Activated CD4-positive, alpha-beta T cell treated with anti-CD3 and anti-CD28 coated beads, Interleukin-2, amount 10 ng/mL, durations not matched to agents 24 days and 14 days (primary cell): ENCODE measurements at regions of chr9 and their contacts with region 1.

Region 1: GRCh38 chr9:134135343-134136118 is at the start of gene WDR5:
- DNase-seq: peak; percentile 96
- H3K4me3 Mint-ChIP-seq: peak within 1 kb of the TSS; percentile 96
- H3K27ac Mint-ChIP-seq: peak within 1 kb of the TSS; percentile 94
- H3K4me1 Mint-ChIP-seq: peaks cover 29% of the 10 kb centered on the region
- H3K27me3 Mint-ChIP-seq: no peaks in the 10 kb centered on the region
- total RNA-seq, gene WDR5: 71.2 TPM in 2 replicates

Region 2: DNA sequence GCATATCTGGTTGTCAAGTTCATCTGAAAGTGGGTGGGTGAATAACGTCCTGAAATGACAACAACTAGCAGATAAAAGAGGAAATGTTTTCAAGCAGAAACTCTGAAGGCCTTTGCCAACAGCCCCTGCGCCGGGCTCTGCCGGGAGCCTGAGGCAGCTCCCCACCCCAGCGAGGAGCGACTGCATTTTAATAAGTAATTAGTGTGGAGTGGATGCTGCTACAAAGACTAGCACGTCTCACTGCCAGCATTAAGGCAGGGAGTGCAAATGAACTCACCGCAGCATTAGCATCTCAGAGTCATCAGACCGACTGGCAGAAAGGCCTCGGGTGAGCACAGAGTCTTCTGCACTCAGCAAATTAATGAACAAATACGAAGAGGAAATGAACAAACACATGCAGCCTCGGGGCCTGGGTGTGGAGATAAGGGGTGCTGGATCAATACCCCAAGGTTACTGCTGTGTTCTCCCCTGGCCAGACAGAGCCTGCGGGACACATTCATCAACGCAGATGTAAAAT is 207.2 kb before region 1 on chr9:
- intact Hi-C with region 1: no loop called
- DNase-seq: no peak
- H3K4me3 Mint-ChIP-seq: no peak overlapping the region
- H3K27ac Mint-ChIP-seq: no peak overlapping the region
- H3K4me1 Mint-ChIP-seq: no peaks in the 10 kb centered on the region
- H3K27me3 Mint-ChIP-seq: no peaks in the 10 kb centered on the region

Region 3: DNA sequence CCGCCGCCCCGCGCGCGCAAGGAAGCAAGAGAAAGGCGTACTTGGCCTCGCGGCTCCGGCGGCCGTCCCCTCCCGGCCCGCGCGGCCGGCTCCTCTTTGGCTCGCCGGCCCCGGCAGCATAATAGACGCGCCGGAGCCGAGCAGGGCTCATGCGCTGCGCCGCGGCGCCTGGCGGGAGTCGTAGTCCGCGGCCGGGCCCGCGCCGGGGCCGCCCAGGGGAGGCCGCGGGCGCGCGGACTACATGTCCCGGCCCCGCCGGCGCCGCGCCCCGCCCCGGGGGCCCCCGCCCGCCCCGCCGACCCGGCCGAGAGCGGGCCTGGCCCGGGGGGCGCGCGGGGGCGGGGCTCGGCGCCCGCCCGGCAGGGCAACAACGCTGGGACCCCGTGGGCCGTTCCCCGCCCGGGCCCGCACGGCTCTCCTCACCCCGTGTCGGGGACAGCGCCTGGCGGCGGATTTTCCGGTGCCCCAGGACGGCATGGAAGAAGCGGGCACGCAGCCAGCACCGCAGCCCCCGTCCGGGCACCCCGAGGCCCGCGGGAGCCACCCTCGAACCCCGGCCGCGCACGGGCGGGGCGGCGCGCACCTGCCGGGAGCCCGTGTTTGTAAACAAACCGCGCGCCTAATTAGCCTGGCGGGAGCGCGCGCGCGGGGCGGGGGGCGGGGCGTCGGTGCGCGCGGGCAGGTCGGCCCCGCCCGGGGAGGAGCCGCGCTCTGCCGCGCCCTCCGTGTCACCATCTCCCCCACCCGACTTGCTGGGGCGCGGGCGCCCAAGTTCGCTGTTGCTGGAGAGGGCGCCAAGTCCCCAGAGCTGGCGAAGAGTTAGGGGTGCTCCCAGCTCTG is 67.4 kb before region 1 on chr9 and contains the start of gene BRD3:
- intact Hi-C with region 1: loop called (anchors 1 kb)
- DNase-seq: peak; percentile 96
- H3K4me3 Mint-ChIP-seq: peak within 1 kb of the TSS; percentile 95
- H3K27ac Mint-ChIP-seq: peak within 1 kb of the TSS; percentile 98
- H3K4me1 Mint-ChIP-seq: peaks cover 24% of the 10 kb centered on the region
- H3K27me3 Mint-ChIP-seq: peaks cover 24% of the 10 kb centered on the region
- total RNA-seq, gene BRD3: 32.3 and 40.9 TPM in 2 replicates

Region 4: DNA sequence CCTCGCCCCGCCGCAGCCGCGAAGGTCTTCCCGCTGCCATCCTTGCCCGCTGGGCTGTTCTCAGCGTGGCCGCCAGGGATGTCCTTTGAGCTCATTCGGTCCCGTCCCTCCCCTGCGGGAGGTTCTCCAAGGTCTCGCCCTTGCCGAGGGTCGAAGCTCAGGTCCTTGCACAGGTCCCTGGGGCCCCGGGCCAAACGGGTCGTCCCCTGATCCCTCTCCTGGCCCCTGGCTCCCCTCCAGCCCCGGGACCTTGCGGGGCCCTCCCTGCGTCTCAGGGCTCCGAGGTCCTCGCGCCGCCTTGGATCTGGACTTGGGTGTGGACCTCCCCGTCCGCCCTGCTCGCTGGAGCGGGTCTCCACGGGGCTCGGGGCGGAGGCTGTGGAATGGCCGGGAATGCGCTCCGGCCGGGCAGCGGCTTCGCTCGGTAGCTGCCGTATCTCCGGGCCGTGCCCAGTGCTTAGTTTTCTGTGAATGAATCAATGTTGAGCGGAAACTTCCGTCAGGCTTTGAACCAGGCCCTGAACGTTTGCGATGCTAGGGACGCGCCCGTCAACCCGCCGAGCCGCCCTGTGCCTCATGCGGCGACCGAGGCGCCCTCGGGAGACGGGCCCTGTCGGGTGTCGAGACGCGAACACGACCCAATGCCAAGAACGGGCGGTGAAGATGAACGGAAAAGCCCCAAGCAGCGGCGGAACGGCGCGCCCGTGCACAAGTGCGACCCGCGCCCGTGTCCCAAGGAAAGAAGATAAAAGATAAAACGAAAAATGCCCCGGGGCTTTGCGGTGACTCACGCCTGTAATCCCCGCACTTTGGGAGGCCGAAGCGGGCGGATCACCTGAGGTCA is 28.0 kb after region 1 on chr9:
- intact Hi-C with region 1: loop called (anchors 1 kb)
- DNase-seq: peak; percentile 89
- H3K4me3 Mint-ChIP-seq: no peak overlapping the region
- H3K27ac Mint-ChIP-seq: no peak overlapping the region
- H3K4me1 Mint-ChIP-seq: peaks cover 20% of the 10 kb centered on the region
- H3K27me3 Mint-ChIP-seq: no peaks in the 10 kb centered on the region